GM23248 (cell line): ENCODE measurements at regions of chr11 and their contacts with region 1.

Region 1: GRCh38 chr11:2885676-2886081 is at the start of gene CDKN1C:
- DNase-seq: peak; percentile 79
- H3K4me3 ChIP-seq: peak within 1 kb of the TSS; percentile 74
- H3K27ac ChIP-seq: no peak within 1 kb of the TSS
- H3K4me1 ChIP-seq: no peaks in the 10 kb centered on the region
- H3K27me3 ChIP-seq: peaks cover 20% of the 10 kb centered on the region
- total RNA-seq, gene CDKN1C: 0.43 TPM in 1 of 2 replicates, not detected in the other

Region 2: GRCh38 chr11:1714973-1715885 is 1170.5 kb before region 1 on chr11:
- in situ Hi-C with region 1: no loop called
- DNase-seq: no peak
- H3K4me3 ChIP-seq: no peak overlapping the region
- H3K27ac ChIP-seq: no peak overlapping the region
- H3K4me1 ChIP-seq: no peaks in the 10 kb centered on the region
- H3K27me3 ChIP-seq: peaks cover 50% of the 10 kb centered on the region

Region 3: DNA sequence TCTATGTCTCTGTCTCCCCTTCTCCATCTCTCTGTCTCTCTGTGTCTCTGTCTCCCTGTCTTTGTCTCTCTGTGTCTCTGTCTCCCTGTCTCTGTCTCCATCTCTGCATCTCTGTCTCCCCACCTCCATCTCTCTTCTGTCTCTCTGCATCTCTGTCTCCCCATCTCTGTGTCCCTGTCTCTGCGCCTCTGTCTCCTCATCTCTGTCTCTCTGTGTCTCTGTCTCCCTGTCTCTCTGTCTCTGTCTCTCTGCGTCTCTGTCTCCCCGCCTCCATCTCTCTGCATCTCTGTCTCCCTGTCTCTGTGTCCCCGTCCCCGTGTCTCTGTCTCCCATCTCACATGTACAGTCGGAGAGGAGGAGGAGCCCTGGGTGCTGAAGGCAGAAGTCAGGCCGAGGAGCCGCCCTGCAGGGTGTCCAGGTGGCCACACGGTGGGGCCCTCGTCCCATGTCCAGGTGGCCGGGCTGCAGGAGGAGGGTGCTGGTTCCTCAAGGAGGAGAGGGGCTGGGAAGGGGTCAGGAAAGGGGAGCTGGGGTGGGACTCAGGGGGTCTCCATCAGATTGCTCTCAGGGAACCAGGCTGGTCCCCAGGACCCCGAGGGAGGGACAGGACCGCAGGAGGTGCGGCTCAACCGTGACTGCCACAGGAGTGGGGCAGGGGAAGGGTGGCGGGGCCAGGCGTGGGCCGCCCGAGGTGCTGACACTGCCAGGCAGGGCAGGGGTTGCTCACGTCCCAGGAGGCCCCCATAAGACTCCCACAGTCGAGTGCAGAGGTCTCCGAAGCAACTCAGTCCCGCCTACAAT is 688.5 kb before region 1 on chr11:
- in situ Hi-C with region 1: loop called (anchors 25 kb)
- DNase-seq: peak; percentile 85
- H3K4me3 ChIP-seq: no peak overlapping the region
- H3K27ac ChIP-seq: no peak overlapping the region
- H3K4me1 ChIP-seq: no peaks in the 10 kb centered on the region
- H3K27me3 ChIP-seq: 0 out of 2 replicates have a peak, but pooled peaks cover 9% of the 10 kb centered on the region

Region 4: DNA sequence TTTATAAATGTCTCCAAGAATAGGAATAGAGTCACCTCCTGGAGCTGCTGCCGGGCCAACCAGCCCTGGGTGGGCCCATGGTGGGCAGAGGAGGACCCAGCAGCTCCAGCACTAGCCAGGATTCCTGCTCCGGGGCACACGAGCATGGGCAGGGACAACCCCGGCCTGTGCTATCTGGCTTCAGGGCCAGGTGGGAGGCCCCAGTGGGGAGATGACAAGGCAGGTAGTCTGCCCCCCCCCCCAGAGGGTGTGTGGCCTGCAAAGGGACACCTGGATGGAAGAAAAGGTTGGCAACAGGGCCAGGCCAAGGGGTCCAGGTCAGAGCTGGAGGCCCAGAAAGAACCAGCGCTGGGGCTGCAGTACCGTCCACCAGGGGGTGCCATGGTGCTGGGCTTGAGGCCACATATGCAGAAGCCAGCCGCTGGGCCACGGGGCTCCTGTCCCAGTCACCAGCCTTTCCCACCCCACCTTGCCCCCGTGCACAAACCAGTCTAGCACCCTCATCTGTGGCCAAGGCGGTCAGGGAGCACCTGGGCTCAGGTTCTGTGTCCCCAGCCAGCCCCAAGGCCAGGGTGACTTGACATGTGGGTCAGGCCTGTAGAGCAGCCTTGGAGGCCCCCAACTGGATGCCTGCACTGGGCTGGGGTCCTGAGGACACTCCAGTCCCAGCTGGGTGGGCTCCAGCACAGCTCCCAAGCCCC is 580.4 kb before region 1 on chr11:
- in situ Hi-C with region 1: loop called (anchors 25 kb)
- DNase-seq: peak; percentile 85
- H3K4me3 ChIP-seq: no peak overlapping the region
- H3K27ac ChIP-seq: peak overlapping the region; percentile 74; the same call in 1 of the 2 replicates
- H3K4me1 ChIP-seq: peaks cover 12% of the 10 kb centered on the region
- H3K27me3 ChIP-seq: no peaks in the 10 kb centered on the region

Region 5: GRCh38 chr11:2532704-2533586 is 352.7 kb before region 1 on chr11:
- in situ Hi-C with region 1: loop called (anchors 5 kb)
- DNase-seq: peak; percentile 89
- H3K4me3 ChIP-seq: peak overlapping the region; percentile 40
- H3K27ac ChIP-seq: no peak overlapping the region
- H3K4me1 ChIP-seq: peaks cover 9% of the 10 kb centered on the region
- H3K27me3 ChIP-seq: peaks cover 4% of the 10 kb centered on the region; the same call in 1 of the 2 replicates